Activated CD4-positive, alpha-beta memory T cell treated with anti-CD3 and anti-CD28 coated beads, Interleukin-2, amount 10 ng/mL, durations not matched to agents 7 days and 5 days (primary cell): ENCODE measurements at regions of chr7 and their contacts with region 1.

Region 1: DNA sequence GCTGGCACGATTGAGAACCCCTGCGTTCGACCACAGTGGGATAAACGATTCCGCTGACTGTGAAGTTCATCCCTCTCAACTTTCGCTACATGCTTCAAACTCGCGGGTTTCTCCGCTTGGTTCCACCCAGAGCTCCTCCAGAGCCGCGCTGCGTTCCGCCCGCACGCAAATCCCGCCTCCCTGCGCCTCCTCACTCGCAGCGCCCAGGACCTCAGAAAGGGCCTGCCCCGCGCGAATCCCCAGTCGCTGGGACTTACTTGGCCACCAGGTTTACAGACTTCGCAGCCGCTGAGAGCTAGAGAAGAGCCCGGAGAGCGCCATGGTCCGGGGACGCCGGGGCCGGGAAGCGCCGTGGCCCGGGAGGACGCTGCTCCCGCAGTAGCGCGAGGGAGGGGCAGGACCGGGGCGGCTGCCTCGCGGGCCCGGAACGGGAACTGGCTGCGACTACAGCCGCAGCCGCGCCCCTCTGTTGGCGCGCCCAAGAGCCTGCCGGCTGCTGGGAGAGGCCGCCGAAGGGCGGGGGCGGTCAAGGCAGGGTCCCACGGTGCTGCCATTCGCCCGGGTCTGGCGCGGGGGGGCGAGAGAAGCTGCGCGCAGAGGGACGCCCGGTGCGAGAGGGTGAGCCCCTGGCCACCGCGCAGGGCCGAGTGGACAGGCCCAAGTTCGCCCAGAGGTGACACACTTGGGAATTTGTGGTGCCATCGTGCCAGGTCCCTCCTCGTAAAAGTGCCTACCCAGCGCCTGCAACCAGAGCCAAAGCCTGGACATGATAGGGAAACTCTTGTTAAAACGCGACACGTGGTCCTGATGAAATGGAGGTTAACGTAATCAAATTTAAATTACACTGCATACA is at the start of gene NOD1:
- DNase-seq: peak; percentile 75
- H3K4me3 Mint-ChIP-seq: peak within 1 kb of the TSS; percentile 93
- H3K27ac Mint-ChIP-seq: peak within 1 kb of the TSS; percentile 87
- H3K4me1 Mint-ChIP-seq: peaks cover 55% of the 10 kb centered on the region
- H3K27me3 Mint-ChIP-seq: no peaks in the 10 kb centered on the region
- total RNA-seq, gene NOD1: 19.6 to 22.6 TPM

Region 2: GRCh38 chr7:30412810-30413504 is 65.6 kb before region 1 on chr7:
- CTCF ChIA-PET with region 1: no interaction called
- POLR2A ChIA-PET with region 1: no interaction called
- DNase-seq: no peak
- H3K4me3 Mint-ChIP-seq: no peak overlapping the region
- H3K27ac Mint-ChIP-seq: no peak overlapping the region
- H3K4me1 Mint-ChIP-seq: no peaks in the 10 kb centered on the region
- H3K27me3 Mint-ChIP-seq: no peaks in the 10 kb centered on the region

Region 3: GRCh38 chr7:30504347-30505173 is 26.0 kb after region 1 on chr7 and contains the start of gene GGCT:
- CTCF ChIA-PET with region 1: interaction called, 7 read pairs
- POLR2A ChIA-PET with region 1: interaction called, 37 read pairs
- DNase-seq: peak; percentile 98
- H3K4me3 Mint-ChIP-seq: peak within 1 kb of the TSS; percentile 81
- H3K27ac Mint-ChIP-seq: peak within 1 kb of the TSS; percentile 84
- H3K4me1 Mint-ChIP-seq: peaks cover 52% of the 10 kb centered on the region
- H3K27me3 Mint-ChIP-seq: no peaks in the 10 kb centered on the region
- total RNA-seq, gene GGCT: 34.2 to 37.7 TPM